Activated CD4-positive, alpha-beta T cell treated with anti-CD3 and anti-CD28 coated beads, Interleukin-2, amount 10 ng/mL, durations not matched to agents 24 days and 14 days (primary cell): ENCODE measurements at regions of chr4 and their contacts with region 1.

Region 1: DNA sequence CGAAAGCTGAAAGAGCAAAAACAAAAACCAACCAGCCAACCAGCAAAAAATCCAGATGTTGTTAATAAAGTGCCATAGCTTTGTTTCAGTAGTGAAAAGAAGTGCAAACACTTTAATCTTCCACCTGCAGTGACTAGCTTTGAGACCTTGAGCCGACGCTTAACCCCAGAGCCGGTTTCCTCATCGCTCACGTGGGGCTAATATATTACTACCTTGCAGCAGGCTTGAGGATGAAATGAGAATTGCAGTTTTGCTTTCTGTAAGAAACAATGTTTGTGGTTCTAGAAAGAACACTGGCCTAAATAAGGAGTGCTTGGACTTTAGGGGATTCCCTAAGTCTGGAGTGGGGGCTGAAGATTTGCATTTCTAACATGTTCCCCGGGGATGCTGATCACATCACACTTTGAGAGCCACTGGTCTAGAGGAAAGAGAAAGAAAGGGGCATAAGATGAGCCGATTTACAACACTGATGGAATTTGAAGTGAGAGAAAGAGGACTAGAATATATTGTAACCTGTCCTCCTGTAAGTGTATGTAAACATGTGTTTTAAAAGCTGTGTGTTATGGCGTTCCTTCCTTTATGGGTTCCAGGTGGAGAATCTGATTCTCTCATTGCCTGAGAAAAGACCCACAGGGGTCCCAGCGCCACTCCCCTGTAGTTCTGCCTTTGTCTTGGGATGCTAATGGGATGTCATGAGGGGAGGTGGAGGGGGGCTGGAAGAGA is 1.4 kb downstream of the FGF2 start:
- DNase-seq: peak; percentile 79
- H3K4me3 Mint-ChIP-seq: peak overlapping the region; percentile 83
- H3K27ac Mint-ChIP-seq: peak overlapping the region; percentile 94
- H3K4me1 Mint-ChIP-seq: peaks cover 24% of the 10 kb centered on the region
- H3K27me3 Mint-ChIP-seq: peaks cover 64% of the 10 kb centered on the region

Region 2: GRCh38 chr4:122617597-122618593 is 210.1 kb before region 1 on chr4:
- intact Hi-C with region 1: loop called (anchors 5 kb)
- DNase-seq: peak; percentile 58
- H3K4me3 Mint-ChIP-seq: peak overlapping the region; percentile 89
- H3K27ac Mint-ChIP-seq: peak overlapping the region; percentile 91
- H3K4me1 Mint-ChIP-seq: peaks cover 50% of the 10 kb centered on the region
- H3K27me3 Mint-ChIP-seq: no peaks in the 10 kb centered on the region

Region 3: GRCh38 chr4:122732329-122733026 is 95.6 kb before region 1 on chr4 and contains the start of gene BBS12:
- intact Hi-C with region 1: loop called (anchors 1 kb)
- DNase-seq: peak; percentile 100
- H3K4me3 Mint-ChIP-seq: peak within 1 kb of the TSS; percentile 94
- H3K27ac Mint-ChIP-seq: peak within 1 kb of the TSS; percentile 96
- H3K4me1 Mint-ChIP-seq: peaks cover 25% of the 10 kb centered on the region
- H3K27me3 Mint-ChIP-seq: no peaks in the 10 kb centered on the region
- total RNA-seq, gene BBS12: 3.8 and 4.7 TPM in 2 replicates

Region 4: GRCh38 chr4:122764821-122765215 is 63.2 kb before region 1 on chr4:
- intact Hi-C with region 1: loop called (anchors 1 kb)
- DNase-seq: no peak
- H3K4me3 Mint-ChIP-seq: peak overlapping the region; percentile 49
- H3K27ac Mint-ChIP-seq: peak overlapping the region; percentile 81
- H3K4me1 Mint-ChIP-seq: peaks cover 33% of the 10 kb centered on the region
- H3K27me3 Mint-ChIP-seq: no peaks in the 10 kb centered on the region

Region 5: GRCh38 chr4:122783301-122784215 is 44.5 kb before region 1 on chr4:
- intact Hi-C with region 1: loop called (anchors 1 kb)
- DNase-seq: peak; percentile 52
- H3K4me3 Mint-ChIP-seq: no peak overlapping the region
- H3K27ac Mint-ChIP-seq: no peak overlapping the region
- H3K4me1 Mint-ChIP-seq: peaks cover 23% of the 10 kb centered on the region
- H3K27me3 Mint-ChIP-seq: no peaks in the 10 kb centered on the region

Region 6: GRCh38 chr4:122803788-122804208 is 24.2 kb before region 1 on chr4:
- intact Hi-C with region 1: no loop called
- DNase-seq: no peak
- H3K4me3 Mint-ChIP-seq: no peak overlapping the region
- H3K27ac Mint-ChIP-seq: no peak overlapping the region
- H3K4me1 Mint-ChIP-seq: peaks cover 11% of the 10 kb centered on the region
- H3K27me3 Mint-ChIP-seq: peaks cover 4% of the 10 kb centered on the region

Region 7: DNA sequence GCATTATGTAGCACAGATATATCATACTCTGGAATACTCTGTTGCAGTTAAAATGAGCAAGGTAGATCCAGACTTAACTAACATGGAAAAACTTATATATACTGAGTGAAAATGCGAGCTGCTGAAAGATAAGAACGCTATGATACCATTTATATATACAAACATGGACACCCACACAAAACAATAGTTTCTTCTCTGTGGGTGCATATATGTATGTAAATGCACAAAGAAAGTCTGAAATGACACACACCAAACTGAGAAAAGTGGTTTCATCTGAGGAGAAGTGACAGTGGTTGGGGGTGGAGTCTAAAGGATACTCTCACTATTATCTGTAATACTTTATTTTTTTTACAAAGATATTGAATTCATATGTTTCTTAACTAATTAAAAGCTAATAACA is 13.6 kb before region 1 on chr4:
- intact Hi-C with region 1: loop called (anchors 1 kb)
- DNase-seq: no peak
- H3K4me3 Mint-ChIP-seq: no peak overlapping the region
- H3K27ac Mint-ChIP-seq: peak overlapping the region; percentile 70
- H3K4me1 Mint-ChIP-seq: peaks cover 10% of the 10 kb centered on the region
- H3K27me3 Mint-ChIP-seq: peaks cover 9% of the 10 kb centered on the region

Region 8: DNA sequence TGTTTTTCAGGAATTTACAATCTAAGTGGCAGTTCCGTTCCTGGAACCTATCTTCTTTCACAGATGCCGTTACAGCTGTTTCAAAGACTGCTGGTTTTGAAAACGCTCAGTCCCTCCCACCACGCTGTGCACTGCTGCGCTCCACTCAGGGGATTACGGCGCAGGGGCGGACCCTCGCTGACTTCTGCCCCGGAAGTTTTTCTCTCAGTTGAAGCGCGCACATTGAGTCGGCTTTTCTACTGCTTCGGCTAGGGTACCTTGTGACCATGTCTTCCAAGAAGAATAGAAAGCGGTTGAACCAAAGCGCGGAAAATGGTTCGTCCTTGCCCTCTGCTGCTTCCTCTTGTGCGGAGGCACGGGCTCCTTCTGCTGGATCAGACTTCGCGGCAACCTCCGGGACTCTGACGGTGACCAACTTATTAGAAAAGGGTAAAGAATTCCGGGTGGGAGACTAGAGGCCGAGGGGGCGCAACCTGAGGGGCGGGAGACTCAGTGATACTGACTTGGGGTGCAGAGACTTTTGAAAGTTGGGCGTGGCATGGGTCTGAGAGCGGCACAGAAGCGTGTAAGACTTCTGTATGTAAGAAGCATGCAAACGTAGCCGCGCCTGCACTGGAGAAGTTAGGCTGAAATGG is 95.0 kb after region 1 on chr4:
- intact Hi-C with region 1: loop called (anchors 1 kb)
- DNase-seq: peak; percentile 97
- H3K4me3 Mint-ChIP-seq: no peak overlapping the region
- H3K27ac Mint-ChIP-seq: peak overlapping the region; percentile 96
- H3K4me1 Mint-ChIP-seq: peaks cover 24% of the 10 kb centered on the region
- H3K27me3 Mint-ChIP-seq: no peaks in the 10 kb centered on the region